ENCODE measurements at regions of chr1 and their contacts with region 1.

Region 1: DNA sequence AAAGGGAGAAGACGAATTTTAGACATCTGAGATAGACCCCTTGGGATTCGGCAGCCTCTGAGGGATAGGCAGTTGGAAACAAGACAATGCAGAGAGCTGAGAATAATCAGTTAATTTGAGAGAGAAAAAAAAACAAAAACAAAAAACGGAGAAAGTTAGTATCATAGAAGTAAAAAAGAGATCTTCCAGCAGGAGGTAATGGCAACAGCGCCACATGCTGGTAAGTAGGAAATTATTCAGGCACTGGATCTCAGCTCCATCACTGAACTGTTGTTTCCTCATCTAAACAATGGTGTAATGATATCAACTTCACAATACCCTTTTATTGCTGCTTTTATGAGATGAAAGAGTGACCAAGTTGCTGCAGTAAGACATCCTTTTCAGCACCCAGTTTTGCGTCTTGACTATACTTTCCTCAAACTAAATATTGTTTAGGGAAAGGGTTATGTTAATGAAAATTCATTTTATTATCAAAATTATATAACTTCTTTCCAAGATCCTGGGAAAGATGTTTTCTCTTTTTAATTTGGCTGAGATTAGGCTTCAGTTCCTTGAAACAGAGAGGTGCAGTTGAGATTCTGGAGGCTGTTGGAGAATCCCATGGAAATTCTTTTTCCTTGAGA is 91.4 kb upstream of the KCNA3 start:
- DNase-seq: peak; percentile 80
- ATAC-seq: peak; percentile 82
- H3K4me3 Mint-ChIP-seq: peak overlapping the region; percentile 29
- H3K27ac Mint-ChIP-seq: no peak overlapping the region
- H3K4me1 Mint-ChIP-seq: peaks cover 9% of the 10 kb centered on the region
- H3K27me3 Mint-ChIP-seq: peaks cover 36% of the 10 kb centered on the region

Region 2: GRCh38 chr1:110605901-110606656 is 160.1 kb before region 1 on chr1 and contains the start of gene KCNA2:
- CTCF ChIA-PET with region 1: interaction called, 13 read pairs
- POLR2A ChIA-PET with region 1: no interaction called
- DNase-seq: no peak
- ATAC-seq: peak; percentile 53
- H3K4me3 Mint-ChIP-seq: peak within 1 kb of the TSS; percentile 66
- H3K27ac Mint-ChIP-seq: no peak within 1 kb of the TSS
- H3K4me1 Mint-ChIP-seq: peaks cover 25% of the 10 kb centered on the region
- H3K27me3 Mint-ChIP-seq: peaks cover 56% of the 10 kb centered on the region
- total RNA-seq, gene KCNA2: 1.4 to 2.2 TPM

Region 3: DNA sequence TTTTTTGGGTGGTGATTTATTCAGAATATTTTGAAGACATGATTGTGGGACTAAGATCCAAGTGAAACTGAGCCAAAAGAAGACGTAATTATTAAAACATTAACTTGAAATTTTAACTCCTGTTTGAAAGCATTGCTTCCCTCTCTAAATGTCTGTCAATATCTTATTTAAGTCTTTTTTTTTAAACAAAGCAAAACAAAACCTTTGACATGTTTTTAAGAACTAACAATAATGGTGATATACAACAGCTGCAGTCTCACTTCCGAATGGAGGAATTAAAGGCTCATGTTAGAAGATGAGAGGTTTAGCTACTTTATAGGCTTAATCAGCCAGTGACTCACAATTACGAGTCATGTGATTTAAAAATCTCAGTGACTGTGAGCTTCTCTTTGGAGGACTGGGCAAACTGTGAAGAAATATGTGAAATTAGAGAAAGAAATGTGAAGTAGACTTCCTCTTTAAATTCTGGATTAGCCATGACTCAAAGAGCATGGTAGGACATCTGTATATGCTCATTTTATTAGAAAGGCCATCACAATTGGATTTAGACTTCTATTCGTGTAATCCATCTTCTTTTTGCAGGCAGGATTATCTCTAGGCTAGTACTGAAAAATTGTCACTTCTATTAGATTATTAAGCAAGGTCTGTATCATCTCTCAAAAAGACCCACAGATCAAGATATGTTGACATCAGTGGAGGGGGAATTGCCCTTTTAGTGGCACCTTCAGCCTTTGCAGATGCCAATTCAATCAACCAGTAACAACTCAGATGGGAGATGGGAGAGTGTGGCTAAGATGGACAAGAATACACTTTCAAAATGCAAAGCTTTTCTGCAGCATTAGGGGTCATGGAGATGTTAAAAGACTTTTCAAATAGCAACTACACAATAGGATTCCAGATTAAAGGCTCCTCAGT is 120.1 kb before region 1 on chr1:
- CTCF ChIA-PET with region 1: interaction called, 28 read pairs
- POLR2A ChIA-PET with region 1: no interaction called
- DNase-seq: no peak
- ATAC-seq: no peak
- H3K4me3 Mint-ChIP-seq: no peak overlapping the region
- H3K27ac Mint-ChIP-seq: peak overlapping the region; percentile 53
- H3K4me1 Mint-ChIP-seq: peaks cover 41% of the 10 kb centered on the region
- H3K27me3 Mint-ChIP-seq: no peaks in the 10 kb centered on the region

Region 4: DNA sequence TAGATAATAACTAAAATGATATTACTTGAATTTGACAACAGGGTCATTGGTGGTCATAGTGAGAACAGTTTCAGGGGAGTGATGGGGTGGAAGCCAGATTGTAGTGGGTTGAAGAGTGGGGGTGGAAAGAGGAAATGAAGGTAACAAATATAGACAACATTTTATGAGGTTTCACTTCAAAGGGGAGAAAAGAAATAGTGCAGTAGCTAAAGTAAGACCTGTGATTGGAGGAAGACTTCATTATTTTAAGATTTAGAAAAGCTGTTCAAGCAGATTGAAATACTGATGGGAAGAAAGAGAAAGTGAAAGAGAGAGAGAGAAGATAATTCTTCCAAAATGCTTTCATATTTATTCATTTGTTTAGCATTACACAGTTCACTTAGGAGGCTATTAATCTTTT is 39.4 kb before region 1 on chr1:
- CTCF ChIA-PET with region 1: interaction called, 31 read pairs
- POLR2A ChIA-PET with region 1: no interaction called
- DNase-seq: no peak
- ATAC-seq: peak; percentile 55
- H3K4me3 Mint-ChIP-seq: peak overlapping the region; percentile 60
- H3K27ac Mint-ChIP-seq: peak overlapping the region; percentile 80
- H3K4me1 Mint-ChIP-seq: peaks cover 33% of the 10 kb centered on the region
- H3K27me3 Mint-ChIP-seq: no peaks in the 10 kb centered on the region

Region 5: GRCh38 chr1:110787328-110788071 is 21.4 kb after region 1 on chr1:
- CTCF ChIA-PET with region 1: interaction called, 113 read pairs
- POLR2A ChIA-PET with region 1: interaction called, 3 read pairs
- DNase-seq: peak; percentile 87
- ATAC-seq: peak; percentile 81
- H3K4me3 Mint-ChIP-seq: peak overlapping the region; percentile 66
- H3K27ac Mint-ChIP-seq: peak overlapping the region; percentile 95
- H3K4me1 Mint-ChIP-seq: peaks cover 73% of the 10 kb centered on the region
- H3K27me3 Mint-ChIP-seq: no peaks in the 10 kb centered on the region

Measured in activated CD8-positive, alpha-beta T cell treated with anti-CD3 and anti-CD28 coated beads, Interleukin-2, amount 10 ng/mL, durations not matched to agents 7 days and 5 days (primary cell).